Activated CD8-positive, alpha-beta memory T cell treated with anti-CD3 and anti-CD28 coated beads, Interleukin-2, amount 10 ng/mL, durations not matched to agents 7 days and 5 days (primary cell): ENCODE measurements at regions of chr6 and their contacts with region 1.

Region 1: DNA sequence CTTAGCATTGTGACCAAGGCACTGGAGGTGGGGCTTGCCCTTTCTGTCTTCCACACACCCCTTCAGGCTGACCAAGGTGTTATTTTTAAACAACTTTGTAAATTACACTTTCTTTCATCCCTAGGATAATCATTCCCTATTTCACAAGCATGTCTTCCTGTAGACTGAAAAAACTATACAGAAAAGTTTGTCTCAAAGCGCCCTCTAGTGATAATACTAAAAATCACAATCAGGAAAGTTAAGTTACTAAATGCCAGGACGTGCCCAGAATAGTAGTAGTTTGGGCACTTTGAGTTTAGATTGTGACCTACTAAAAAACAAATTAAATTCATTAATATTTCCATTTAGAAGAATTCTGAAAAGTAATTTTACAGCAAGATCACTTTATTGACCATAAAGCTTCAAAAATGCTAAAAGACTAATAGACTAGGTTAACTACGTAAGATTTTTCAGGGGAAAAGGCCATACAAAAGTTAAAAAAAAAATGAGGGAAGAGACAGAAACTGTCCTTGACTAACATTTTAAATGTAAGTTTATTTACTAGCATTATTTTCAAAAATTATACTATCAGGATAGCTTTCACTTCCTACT is 123.3 kb upstream of the DUSP22 start:
- DNase-seq: no peak
- ATAC-seq: no peak
- H3K4me3 Mint-ChIP-seq: no peak overlapping the region
- H3K27ac Mint-ChIP-seq: no peak overlapping the region
- H3K4me1 Mint-ChIP-seq: peaks cover 3% of the 10 kb centered on the region
- H3K27me3 Mint-ChIP-seq: peaks cover 53% of the 10 kb centered on the region

Region 2: DNA sequence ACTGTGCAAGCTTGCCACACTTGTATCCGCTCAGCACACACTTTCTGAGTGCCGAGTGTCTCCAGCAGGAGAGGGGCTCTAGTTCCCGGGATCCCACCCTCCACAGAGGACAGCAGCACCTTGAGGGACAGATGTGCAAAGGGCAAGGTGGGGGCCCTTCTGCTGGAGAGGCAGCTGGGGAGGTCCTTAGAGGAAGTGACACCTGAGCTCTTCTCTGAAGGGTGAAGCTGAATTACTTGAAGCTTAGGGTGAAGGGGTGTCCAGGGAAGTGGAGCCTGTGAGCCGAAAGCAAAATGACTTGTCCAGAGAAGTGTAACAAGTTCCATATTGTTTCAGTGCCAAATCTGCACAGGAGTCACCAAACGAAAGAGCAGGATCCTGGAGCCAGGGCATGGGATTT is 12.9 kb before region 1 on chr6:
- CTCF ChIA-PET with region 1: interaction called, 30 read pairs
- DNase-seq: no peak
- ATAC-seq: no peak
- H3K4me3 Mint-ChIP-seq: no peak overlapping the region
- H3K27ac Mint-ChIP-seq: peak overlapping the region; percentile 63
- H3K4me1 Mint-ChIP-seq: peaks cover 58% of the 10 kb centered on the region
- H3K27me3 Mint-ChIP-seq: peaks cover 59% of the 10 kb centered on the region

Region 3: DNA sequence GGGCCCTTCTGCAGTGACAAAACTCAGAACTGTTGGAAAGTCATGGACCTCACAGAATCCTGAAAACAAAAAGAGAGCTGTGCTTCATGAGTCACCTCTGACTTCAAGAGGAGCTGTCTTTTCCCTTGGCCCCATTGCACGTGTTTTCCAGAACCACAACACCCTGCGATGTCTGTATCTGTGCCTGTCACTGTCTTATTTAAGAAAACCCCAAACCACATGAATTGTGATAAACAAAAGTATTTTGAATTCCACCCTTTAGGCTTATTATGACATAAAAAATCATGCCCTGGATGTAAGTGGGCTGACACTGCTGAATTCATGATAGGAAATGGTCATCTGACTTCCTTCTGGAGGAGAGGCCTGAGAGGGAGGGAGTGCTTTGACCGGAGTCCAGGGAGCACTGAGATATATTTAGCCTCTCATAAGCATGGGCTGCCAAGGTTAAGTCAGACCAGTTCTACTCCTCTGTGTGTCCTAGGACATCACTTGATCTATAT is 27.0 kb after region 1 on chr6:
- CTCF ChIA-PET with region 1: no interaction called
- DNase-seq: peak; percentile 60
- ATAC-seq: peak; percentile 27
- H3K4me3 Mint-ChIP-seq: no peak overlapping the region
- H3K27ac Mint-ChIP-seq: peak overlapping the region; percentile 7
- H3K4me1 Mint-ChIP-seq: peaks cover 49% of the 10 kb centered on the region
- H3K27me3 Mint-ChIP-seq: no peaks in the 10 kb centered on the region

Region 4: GRCh38 chr6:241096-241865 is 72.3 kb after region 1 on chr6:
- CTCF ChIA-PET with region 1: no interaction called
- DNase-seq: no peak
- ATAC-seq: no peak
- H3K4me3 Mint-ChIP-seq: no peak overlapping the region
- H3K27ac Mint-ChIP-seq: no peak overlapping the region
- H3K4me1 Mint-ChIP-seq: peaks cover 15% of the 10 kb centered on the region
- H3K27me3 Mint-ChIP-seq: peaks cover 8% of the 10 kb centered on the region

Region 5: DNA sequence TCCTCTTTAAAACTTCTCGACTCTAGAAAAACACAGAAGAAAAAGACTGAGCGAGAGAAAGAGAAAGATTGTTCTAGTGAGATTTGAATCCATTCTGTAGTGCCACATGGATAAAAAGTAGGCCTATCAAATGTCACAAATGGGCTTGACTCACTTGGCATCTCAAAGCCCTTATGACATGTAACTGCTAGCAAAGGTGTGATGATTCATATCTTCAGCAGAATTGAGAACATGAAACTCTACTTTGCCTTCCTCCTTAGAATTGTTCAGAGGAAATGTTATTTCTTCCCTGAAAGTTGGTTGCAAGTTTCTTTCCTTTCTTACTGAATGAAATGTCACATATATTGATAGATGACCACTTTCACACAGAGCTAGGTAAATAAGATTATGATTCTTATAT is 83.0 kb after region 1 on chr6:
- CTCF ChIA-PET with region 1: no interaction called
- DNase-seq: no peak
- ATAC-seq: peak; percentile 76
- H3K4me3 Mint-ChIP-seq: peak overlapping the region; percentile 24
- H3K27ac Mint-ChIP-seq: peak overlapping the region; percentile 91
- H3K4me1 Mint-ChIP-seq: peaks cover 53% of the 10 kb centered on the region
- H3K27me3 Mint-ChIP-seq: no peaks in the 10 kb centered on the region